ENCODE measurements at regions of chrX and their contacts with region 1.

Region 1: GRCh38 chrX:47560831-47561652 is at the start of gene ARAF:
- DNase-seq: peak; percentile 97
- H3K4me3 Mint-ChIP-seq: peak within 1 kb of the TSS; percentile 80
- H3K27ac Mint-ChIP-seq: peak within 1 kb of the TSS; percentile 93
- H3K4me1 Mint-ChIP-seq: peaks cover 41% of the 10 kb centered on the region
- H3K27me3 Mint-ChIP-seq: no peaks in the 10 kb centered on the region
- total RNA-seq, gene ARAF: 66.4 to 68.6 TPM

Region 2: DNA sequence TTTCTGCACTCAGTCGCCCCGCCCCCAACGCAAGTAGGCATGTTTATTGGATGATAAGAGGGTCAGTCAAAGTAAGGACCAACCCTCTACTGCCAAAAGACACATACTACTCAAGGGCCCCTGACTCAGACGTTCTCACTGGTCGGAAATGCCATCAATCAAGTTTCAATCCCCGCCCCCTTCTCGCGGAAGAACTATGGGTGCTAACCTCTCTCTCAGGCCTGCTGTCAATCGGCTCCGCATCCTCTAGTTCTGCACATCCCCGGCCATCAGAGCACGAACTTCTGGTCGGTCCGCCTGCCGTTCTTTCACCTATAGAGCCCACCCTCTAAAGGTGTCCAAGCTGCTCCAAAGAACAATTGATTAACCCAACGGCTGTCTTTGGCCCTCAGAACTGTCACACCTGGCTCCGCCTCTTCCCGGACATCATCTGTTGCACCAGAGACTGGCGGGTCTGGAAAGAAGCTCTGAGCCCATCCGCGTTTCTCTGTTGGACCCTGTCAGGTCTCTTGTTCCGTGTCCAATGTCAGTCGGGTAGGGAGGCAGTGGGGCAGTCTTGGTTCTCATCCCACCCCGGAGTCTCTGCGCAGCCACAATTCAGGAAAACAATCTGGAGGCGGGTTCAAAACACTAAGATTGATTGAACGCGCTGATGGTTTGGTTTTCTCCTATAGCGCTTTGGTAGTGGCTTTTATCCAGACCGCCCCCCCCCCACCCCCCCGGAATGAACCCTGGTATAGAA is 431.7 kb before region 1 on chrX:
- CTCF ChIA-PET with region 1: no interaction called
- POLR2A ChIA-PET with region 1: no interaction called
- intact Hi-C with region 1: loop called (anchors 1 kb)
- DNase-seq: peak; percentile 94
- H3K4me3 Mint-ChIP-seq: peak overlapping the region; percentile 96
- H3K27ac Mint-ChIP-seq: peak overlapping the region; percentile 95
- H3K4me1 Mint-ChIP-seq: peaks cover 4% of the 10 kb centered on the region
- H3K27me3 Mint-ChIP-seq: no peaks in the 10 kb centered on the region

Region 3: GRCh38 chrX:47384502-47384901 is 176.5 kb before region 1 on chrX:
- CTCF ChIA-PET with region 1: no interaction called
- POLR2A ChIA-PET with region 1: no interaction called
- intact Hi-C with region 1: no loop called
- DNase-seq: peak; percentile 73
- H3K4me3 Mint-ChIP-seq: no peak overlapping the region
- H3K27ac Mint-ChIP-seq: no peak overlapping the region
- H3K4me1 Mint-ChIP-seq: peaks cover 7% of the 10 kb centered on the region
- H3K27me3 Mint-ChIP-seq: no peaks in the 10 kb centered on the region

Region 4: GRCh38 chrX:47581731-47582647 is 20.9 kb after region 1 on chrX and contains the start of gene TIMP1:
- CTCF ChIA-PET with region 1: interaction called, 3 read pairs
- POLR2A ChIA-PET with region 1: no interaction called
- intact Hi-C with region 1: loop called (anchors 1 kb)
- DNase-seq: peak; percentile 92
- H3K4me3 Mint-ChIP-seq: peak within 1 kb of the TSS; percentile 65
- H3K27ac Mint-ChIP-seq: peak within 1 kb of the TSS; percentile 74
- H3K4me1 Mint-ChIP-seq: peaks cover 41% of the 10 kb centered on the region
- H3K27me3 Mint-ChIP-seq: no peaks in the 10 kb centered on the region
- total RNA-seq, gene TIMP1: 85.6 to 92.8 TPM

Region 5: DNA sequence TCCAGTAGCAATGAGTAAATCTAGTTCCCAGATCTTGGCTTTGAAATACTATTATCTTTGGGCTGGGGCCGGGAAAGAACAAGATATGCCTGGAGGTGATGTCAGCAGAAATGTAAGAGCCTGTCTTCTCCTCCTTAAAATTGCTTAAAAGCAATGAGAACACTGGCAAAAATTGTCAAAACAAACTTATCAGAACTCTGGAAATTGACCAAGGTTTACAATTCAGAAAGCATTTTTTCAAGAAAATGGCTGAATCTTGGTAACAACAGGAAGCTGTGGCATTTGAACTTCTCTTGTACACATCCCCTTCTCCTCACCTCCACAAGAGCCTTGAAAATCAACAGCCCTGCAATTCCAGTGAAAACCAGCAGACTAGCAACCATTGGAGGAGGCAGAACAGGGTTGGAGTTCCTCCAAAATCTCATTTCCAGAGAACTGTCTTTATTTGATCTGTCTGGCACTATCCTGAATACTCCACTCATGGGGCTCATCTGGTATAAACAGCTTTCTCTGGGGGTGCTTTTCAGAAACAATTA is 34.7 kb after region 1 on chrX:
- CTCF ChIA-PET with region 1: no interaction called
- POLR2A ChIA-PET with region 1: no interaction called
- intact Hi-C with region 1: no loop called
- DNase-seq: no peak
- H3K4me3 Mint-ChIP-seq: no peak overlapping the region
- H3K27ac Mint-ChIP-seq: peak overlapping the region; percentile 51
- H3K4me1 Mint-ChIP-seq: peaks cover 9% of the 10 kb centered on the region
- H3K27me3 Mint-ChIP-seq: no peaks in the 10 kb centered on the region

Region 6: GRCh38 chrX:47650164-47651042 is 89.4 kb after region 1 on chrX and contains the start of gene ELK1:
- CTCF ChIA-PET with region 1: no interaction called
- POLR2A ChIA-PET with region 1: interaction called, 5 read pairs
- intact Hi-C with region 1: loop called (anchors 2 kb)
- DNase-seq: peak; percentile 94
- H3K4me3 Mint-ChIP-seq: peak within 1 kb of the TSS; percentile 84
- H3K27ac Mint-ChIP-seq: peak within 1 kb of the TSS; percentile 93
- H3K4me1 Mint-ChIP-seq: peaks cover 41% of the 10 kb centered on the region
- H3K27me3 Mint-ChIP-seq: no peaks in the 10 kb centered on the region
- total RNA-seq, gene ELK1: 93.6 to 95.3 TPM

Region 7: DNA sequence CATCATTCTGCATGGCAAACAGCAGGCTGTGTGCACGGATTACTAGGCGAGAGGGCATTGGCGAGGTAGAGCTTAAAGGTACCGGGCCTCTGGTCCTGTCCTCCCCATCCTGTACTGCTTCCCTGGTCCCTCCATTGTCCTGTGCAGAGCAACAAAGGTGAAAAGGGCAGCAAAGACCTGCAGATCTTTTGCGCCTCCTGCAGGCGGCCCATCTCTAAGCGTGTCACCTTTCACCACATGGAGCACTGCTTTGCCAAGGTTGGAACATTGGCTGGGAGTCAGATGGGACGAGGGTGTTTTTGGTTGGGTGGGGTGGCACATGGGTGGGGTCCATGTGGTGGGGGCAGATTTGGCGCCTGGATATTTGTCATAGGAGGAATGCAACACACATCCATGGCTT is 162.6 kb after region 1 on chrX:
- CTCF ChIA-PET with region 1: no interaction called
- POLR2A ChIA-PET with region 1: no interaction called
- intact Hi-C with region 1: loop called (anchors 1 kb)
- DNase-seq: peak; percentile 54
- H3K4me3 Mint-ChIP-seq: no peak overlapping the region
- H3K27ac Mint-ChIP-seq: no peak overlapping the region
- H3K4me1 Mint-ChIP-seq: no peaks in the 10 kb centered on the region
- H3K27me3 Mint-ChIP-seq: no peaks in the 10 kb centered on the region

Measured in activated CD4-positive, alpha-beta memory T cell treated with anti-CD3 and anti-CD28 coated beads for 36 hours (primary cell).